Mammary epithelial cell (primary cell): ENCODE measurements at regions of chr17 and their contacts with region 1.

Region 1: DNA sequence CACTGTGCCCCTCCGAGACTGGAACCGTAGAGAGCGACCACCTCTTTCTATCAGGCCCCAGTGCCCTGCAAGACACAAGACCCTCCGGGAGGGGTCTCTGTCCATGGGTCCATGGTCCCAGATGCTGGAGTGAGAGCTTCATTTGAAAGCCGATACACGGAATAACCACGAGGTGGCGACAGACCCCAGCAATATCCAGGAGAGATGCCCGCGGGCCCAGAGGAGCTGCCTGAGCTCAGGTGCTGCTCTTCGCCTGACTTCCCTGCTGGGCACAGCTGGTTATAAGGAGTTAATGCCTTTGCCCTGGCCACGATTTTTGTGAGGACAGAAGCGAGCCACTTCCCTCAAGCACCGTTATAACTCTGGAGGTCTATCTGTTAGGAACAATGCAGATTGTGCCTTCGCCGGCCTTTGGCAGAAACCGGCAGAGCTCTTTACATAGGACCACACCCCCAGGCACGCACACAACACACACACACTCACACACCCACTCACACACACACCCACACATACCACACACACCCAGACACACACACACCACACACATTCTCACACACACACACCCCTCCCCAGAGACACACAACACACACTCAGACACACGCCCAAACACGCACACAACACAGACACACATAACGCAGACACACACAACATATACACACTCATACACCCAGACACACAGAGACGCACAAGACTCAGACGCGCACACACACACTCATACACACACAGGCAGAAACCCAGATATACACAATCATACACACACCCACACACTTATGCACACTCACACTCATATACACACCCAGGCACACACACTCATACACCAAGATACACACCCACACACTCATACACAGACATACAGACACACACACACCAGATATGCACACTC is 436.4 kb downstream of the SOX9 start:
- DNase-seq: peak; percentile 67
- H3K4me3 ChIP-seq: no peak overlapping the region
- H3K27ac ChIP-seq: no peak overlapping the region
- H3K4me1 ChIP-seq: peaks cover 23% of the 10 kb centered on the region
- H3K27me3 ChIP-seq: no peaks in the 10 kb centered on the region
- CTCF ChIP-seq: peak; percentile 80 to 88

Region 2: GRCh38 chr17:72456026-72456569 is 101.1 kb before region 1 on chr17:
- CTCF ChIA-PET with region 1: no interaction called
- dilution Hi-C with region 1: no loop called
- in situ Hi-C with region 1: no loop called
- intact Hi-C with region 1: no loop called
- DNase-seq: peak; percentile 75
- H3K4me3 ChIP-seq: no peak overlapping the region
- H3K27ac ChIP-seq: peak overlapping the region; percentile 1
- H3K4me1 ChIP-seq: peaks cover 28% of the 10 kb centered on the region
- H3K27me3 ChIP-seq: no peaks in the 10 kb centered on the region
- CTCF ChIP-seq: no peak

Region 3: DNA sequence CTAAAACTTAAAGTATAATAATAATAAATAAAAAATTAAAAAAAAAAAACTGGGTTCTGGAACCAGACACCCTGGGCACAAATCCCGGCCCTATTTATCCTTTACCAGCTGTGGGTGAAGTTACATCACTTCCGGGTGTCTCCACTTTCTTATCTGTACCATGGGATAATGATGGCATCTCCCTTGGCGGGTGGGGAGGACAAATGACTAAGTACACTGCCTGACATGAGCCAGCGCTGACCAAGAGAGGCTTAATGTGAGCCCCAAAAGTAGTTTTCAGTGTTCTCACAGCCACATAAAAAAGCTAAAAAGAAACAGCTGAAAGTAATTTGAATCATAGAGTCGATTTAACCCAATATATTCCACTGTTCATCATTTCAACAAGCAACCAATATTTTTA is 11.4 kb before region 1 on chr17:
- CTCF ChIA-PET with region 1: no interaction called
- dilution Hi-C with region 1: no loop called
- in situ Hi-C with region 1: no loop called
- intact Hi-C with region 1: no loop called
- DNase-seq: no peak
- H3K4me3 ChIP-seq: no peak overlapping the region
- H3K27ac ChIP-seq: no peak overlapping the region
- H3K4me1 ChIP-seq: peaks cover 2% of the 10 kb centered on the region
- H3K27me3 ChIP-seq: no peaks in the 10 kb centered on the region
- CTCF ChIP-seq: no peak

Region 4: DNA sequence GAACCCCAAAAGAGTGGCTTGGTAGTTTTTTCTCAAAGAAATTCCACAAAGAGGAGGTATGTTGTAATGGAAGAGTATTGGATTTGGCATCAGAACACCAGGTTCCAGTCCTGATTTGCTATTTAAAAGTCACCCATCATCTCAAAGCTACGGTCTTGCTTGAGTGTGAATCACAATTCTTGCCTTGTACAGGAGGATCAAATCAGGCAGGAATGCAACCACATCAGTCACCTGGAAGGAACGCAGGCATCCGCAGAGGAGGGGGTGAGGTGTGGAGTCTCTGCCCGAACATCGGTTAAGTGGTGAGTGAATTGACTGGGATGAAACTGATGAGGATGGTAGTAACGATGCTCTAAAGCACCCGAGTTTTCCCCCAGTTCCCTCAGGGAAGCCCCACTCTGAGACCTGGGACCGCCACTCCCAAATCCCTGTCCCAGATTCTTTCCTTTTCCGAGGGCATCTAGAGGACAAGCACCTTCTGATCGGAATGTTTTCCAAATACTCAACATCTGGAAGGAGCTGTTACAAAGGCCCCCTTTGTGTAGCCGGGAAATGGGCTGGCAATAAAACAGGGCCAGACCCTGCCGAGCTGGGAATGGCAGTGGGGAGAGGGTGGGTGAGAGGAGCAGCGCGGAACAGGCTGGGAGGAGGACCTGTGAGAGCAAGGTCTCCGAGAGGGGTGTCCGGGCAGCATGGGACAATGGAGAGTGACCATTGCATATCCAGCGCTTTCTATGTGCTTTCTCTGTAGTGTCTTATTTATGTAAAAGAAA is 65.7 kb after region 1 on chr17:
- CTCF ChIA-PET with region 1: interaction called, 20 read pairs
- dilution Hi-C with region 1: no loop called
- in situ Hi-C with region 1: no loop called
- intact Hi-C with region 1: loop called (anchors 1 kb)
- DNase-seq: peak; percentile 95
- H3K4me3 ChIP-seq: peak overlapping the region in 1 of 3 experiments; percentile 6
- H3K27ac ChIP-seq: peak overlapping the region; percentile 85
- H3K4me1 ChIP-seq: peaks cover 37% of the 10 kb centered on the region
- H3K27me3 ChIP-seq: no peaks in the 10 kb centered on the region
- CTCF ChIP-seq: no peak

Region 5: GRCh38 chr17:72661093-72661944 is 104.1 kb after region 1 on chr17:
- CTCF ChIA-PET with region 1: no interaction called
- dilution Hi-C with region 1: no loop called
- in situ Hi-C with region 1: no loop called
- intact Hi-C with region 1: loop called (anchors 1 kb)
- DNase-seq: peak; percentile 100
- H3K4me3 ChIP-seq: no peak overlapping the region
- H3K27ac ChIP-seq: peak overlapping the region; percentile 83
- H3K4me1 ChIP-seq: peaks cover 37% of the 10 kb centered on the region
- H3K27me3 ChIP-seq: no peaks in the 10 kb centered on the region
- CTCF ChIP-seq: peak; percentile 71 to 74

Region 6: DNA sequence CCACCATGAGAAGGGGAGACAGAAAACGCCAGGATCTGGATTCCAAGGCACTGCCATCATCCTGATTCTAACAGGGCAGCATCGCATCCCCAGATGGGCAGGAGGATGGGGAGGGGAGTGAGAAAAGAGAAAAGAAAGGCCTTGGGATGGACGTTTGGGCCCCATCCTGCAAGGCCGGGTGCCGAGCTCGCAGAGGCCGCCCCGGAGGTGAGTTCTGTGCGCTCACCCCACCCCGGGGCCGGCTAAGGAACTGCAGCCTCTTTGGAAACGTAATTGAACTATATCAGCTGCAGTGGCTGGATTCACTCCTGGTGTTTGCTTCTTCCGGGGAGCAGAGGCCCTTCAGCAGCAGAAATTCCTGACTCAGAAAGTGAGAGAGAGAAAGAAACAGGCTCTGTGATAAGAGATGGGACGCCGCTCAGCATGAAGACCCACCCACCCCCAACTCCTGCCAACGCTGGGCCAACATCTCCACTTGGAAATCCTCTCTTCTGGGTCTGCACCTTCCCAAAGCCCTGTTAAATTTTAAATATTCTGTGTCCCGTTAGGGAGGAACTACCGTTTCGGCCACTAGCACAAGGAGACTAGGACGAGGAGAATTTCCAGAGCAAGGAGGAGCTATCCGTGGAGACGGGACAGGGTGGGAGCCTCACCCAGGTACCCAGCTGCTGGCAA is 599.1 kb after region 1 on chr17:
- CTCF ChIA-PET with region 1: interaction called, 3 read pairs
- dilution Hi-C with region 1: no loop called
- in situ Hi-C with region 1: no loop called
- intact Hi-C with region 1: loop called (anchors 1 kb)
- DNase-seq: peak; percentile 47
- H3K4me3 ChIP-seq: no peak overlapping the region
- H3K27ac ChIP-seq: no peak overlapping the region
- H3K4me1 ChIP-seq: no peaks in the 10 kb centered on the region
- H3K27me3 ChIP-seq: no peaks in the 10 kb centered on the region
- CTCF ChIP-seq: peak; percentile 64 to 92

Region 7: DNA sequence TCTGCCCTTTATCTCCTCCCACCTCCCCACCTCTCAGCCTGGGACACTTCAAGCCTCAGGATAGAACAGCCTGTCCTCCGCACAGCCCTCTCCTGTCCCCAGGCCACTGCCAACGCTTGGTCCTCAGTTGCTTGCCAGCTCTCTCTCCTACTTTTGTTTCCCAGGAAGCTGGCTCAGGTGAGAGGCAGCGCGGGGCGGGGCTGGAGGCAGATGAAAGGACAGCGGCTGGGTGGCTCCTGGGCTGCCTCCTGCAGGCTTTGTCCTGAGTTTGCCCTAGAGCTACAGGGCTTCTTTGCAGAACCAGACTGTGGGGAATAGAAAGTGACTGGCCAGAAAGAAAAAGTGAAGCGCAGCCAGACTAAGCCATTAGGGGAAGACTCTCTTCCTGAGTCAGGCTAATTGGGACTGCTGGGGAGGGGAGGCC is 802.8 kb after region 1 on chr17:
- CTCF ChIA-PET with region 1: no interaction called
- dilution Hi-C with region 1: no loop called
- in situ Hi-C with region 1: no loop called
- intact Hi-C with region 1: loop called (anchors 1 kb)
- DNase-seq: peak; percentile 65
- H3K4me3 ChIP-seq: no peak overlapping the region
- H3K27ac ChIP-seq: no peak overlapping the region
- H3K4me1 ChIP-seq: peaks cover 10% of the 10 kb centered on the region
- H3K27me3 ChIP-seq: no peaks in the 10 kb centered on the region
- CTCF ChIP-seq: peak; percentile 14 to 51